Left colon (tissue), 2 donors: ENCODE measurements at regions of chr2 and their contacts with region 1.

Region 1: DNA sequence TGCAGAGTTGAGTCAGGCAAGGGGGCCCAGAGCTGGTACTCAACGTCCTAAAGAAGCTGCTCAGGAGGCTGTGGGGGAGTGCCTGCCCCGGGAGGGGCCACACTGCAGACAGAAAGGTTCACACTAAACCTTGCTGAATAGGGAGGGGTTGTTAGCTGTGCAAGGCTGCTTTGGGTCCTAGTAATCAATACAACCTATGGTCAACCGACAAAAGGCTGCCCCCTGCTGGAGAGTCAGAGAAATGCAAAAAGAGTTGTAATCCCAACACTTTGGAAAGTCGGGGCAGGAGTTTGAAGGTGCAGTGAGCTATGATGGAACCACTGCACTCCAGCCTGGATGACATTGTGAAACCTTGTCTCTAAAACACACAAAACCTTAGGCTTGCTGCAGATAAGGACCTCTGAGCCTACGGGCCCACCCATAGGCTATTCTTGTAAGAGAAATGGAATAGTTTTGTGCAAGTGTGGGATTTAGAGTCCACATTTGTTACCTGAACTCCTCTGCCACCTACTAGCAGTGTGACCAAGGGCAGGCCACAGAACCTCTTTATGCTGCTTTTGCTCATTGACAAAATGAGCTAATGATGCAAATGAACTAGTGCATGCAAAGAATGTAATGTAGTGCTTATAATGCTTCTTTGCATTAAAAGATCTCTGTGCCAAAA is 81.5 kb downstream of the PRPF40A start:
- DNase-seq: peak; percentile 37 to 68
- ATAC-seq: peak; percentile 80

Region 2: GRCh38 chr2:152189622-152190495 is 445.9 kb before region 1 on chr2:
- intact Hi-C with region 1: loop called (anchors 2 to 10 kb)
- DNase-seq: no peak
- ATAC-seq: peak; percentile 82